ENCODE measurements at regions of chr12 and their contacts with region 1.

Region 1: GRCh38 chr12:53159195-53159839 is 21.2 kb upstream of the ZNF740 start:
- DNase-seq: peak; percentile 96
- ATAC-seq: peak; percentile 99
- H3K4me3 Mint-ChIP-seq: peak overlapping the region; percentile 27
- H3K27ac Mint-ChIP-seq: peak overlapping the region; percentile 81
- H3K4me1 Mint-ChIP-seq: peaks cover 11% of the 10 kb centered on the region
- H3K27me3 Mint-ChIP-seq: no peaks in the 10 kb centered on the region

Region 2: GRCh38 chr12:53131844-53132243 is 27.5 kb before region 1 on chr12:
- CTCF ChIA-PET with region 1: interaction called, 10 read pairs
- POLR2A ChIA-PET with region 1: no interaction called
- intact Hi-C with region 1: no loop called
- DNase-seq: no peak
- ATAC-seq: no peak
- H3K4me3 Mint-ChIP-seq: no peak overlapping the region
- H3K27ac Mint-ChIP-seq: no peak overlapping the region
- H3K4me1 Mint-ChIP-seq: peaks cover 4% of the 10 kb centered on the region
- H3K27me3 Mint-ChIP-seq: peaks cover 8% of the 10 kb centered on the region

Region 3: DNA sequence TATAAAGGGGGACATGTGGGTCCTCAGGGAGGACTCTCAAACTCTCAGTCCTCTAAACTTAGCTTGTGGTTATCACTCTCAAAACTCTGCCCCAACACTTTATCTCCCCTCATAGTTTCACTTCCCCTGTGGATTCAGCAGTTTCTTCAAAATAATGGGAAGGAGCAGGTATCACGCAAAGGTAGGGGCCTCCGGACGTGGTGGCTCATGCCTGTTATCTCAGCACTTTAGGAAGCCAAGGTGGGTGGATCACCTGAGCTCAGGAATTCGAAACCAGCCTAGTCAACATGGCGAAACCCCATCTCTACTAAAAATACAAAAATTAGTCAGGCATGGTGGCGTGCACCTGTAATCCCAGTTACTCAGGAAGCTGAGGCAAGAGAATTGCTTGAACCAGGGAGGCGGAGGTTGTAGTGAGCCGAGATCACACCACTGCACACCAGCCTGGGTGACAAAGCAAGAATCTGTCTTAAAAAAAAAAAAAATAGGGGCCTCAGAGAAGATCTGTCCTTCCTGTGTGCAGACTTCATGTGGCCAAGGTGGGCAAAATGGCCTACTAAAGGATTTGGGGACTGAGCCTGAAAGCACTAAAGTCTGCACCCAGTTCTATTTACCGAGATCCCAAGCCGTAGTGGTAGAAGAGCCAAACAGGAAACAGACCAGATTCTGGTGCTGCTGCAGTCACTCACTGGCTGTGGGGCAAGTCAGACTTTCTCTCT is 41.3 kb after region 1 on chr12:
- CTCF ChIA-PET with region 1: interaction called, 54 read pairs
- POLR2A ChIA-PET with region 1: interaction called, 3 read pairs
- intact Hi-C with region 1: loop called in 1 of 2 experiments (anchors 1 kb)
- DNase-seq: peak; percentile 68
- ATAC-seq: peak; percentile 52
- H3K4me3 Mint-ChIP-seq: peak overlapping the region; percentile 44
- H3K27ac Mint-ChIP-seq: peak overlapping the region; percentile 90
- H3K4me1 Mint-ChIP-seq: peaks cover 74% of the 10 kb centered on the region
- H3K27me3 Mint-ChIP-seq: no peaks in the 10 kb centered on the region

Region 4: DNA sequence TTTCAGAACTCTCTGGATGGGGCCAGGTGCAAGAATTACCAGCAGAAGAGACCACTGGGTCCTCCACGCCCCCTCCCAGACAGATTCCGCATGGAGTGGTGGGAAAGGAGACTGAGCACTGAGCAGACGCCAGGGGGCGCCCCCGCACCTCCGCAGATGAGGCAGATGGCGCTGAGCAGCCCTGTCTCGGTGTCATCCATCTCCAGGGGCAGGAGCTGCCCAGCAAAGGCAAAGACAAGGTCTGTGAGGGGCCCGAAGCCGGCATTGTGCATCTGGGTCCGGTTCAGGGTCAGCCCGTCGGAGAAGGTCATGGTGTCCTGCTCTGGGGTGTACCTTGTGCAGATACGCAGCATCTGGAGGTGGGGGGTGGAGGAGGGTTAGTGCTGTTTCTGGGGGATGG is 54.0 kb after region 1 on chr12:
- CTCF ChIA-PET with region 1: interaction called, 22 read pairs
- POLR2A ChIA-PET with region 1: no interaction called
- intact Hi-C with region 1: no loop called
- DNase-seq: peak; percentile 92
- ATAC-seq: peak; percentile 70
- H3K4me3 Mint-ChIP-seq: no peak overlapping the region
- H3K27ac Mint-ChIP-seq: no peak overlapping the region
- H3K4me1 Mint-ChIP-seq: peaks cover 62% of the 10 kb centered on the region
- H3K27me3 Mint-ChIP-seq: no peaks in the 10 kb centered on the region

Region 5: DNA sequence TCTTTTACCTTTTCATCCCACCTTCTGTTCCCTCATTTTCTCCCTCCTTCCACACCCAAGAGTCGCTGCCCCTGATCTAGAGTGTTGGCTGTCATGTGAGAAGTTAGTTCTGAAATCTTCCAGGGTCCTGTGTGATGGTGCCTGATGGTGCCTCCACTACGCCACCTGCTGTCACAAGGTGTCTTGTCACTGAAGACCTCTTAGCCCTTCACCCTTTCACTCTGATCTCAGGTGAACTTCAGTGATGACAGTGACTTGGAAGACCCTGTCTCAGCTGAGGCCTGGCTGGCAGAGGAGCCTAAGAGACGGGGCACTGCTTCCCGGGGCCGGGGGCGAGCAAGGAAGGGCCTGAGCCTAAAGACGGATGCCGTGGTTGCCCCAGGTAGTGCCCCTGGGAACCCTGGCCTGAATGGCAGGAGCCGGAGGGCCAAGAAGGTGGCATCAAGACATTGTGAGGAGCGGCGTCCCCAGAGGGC is 128.5 kb after region 1 on chr12:
- CTCF ChIA-PET with region 1: interaction called, 13 read pairs
- POLR2A ChIA-PET with region 1: no interaction called
- intact Hi-C with region 1: loop called in 1 of 2 experiments (anchors 1 kb)
- DNase-seq: peak; percentile 79
- ATAC-seq: peak; percentile 78
- H3K4me3 Mint-ChIP-seq: no peak overlapping the region
- H3K27ac Mint-ChIP-seq: no peak overlapping the region
- H3K4me1 Mint-ChIP-seq: peaks cover 15% of the 10 kb centered on the region
- H3K27me3 Mint-ChIP-seq: no peaks in the 10 kb centered on the region

Region 6: DNA sequence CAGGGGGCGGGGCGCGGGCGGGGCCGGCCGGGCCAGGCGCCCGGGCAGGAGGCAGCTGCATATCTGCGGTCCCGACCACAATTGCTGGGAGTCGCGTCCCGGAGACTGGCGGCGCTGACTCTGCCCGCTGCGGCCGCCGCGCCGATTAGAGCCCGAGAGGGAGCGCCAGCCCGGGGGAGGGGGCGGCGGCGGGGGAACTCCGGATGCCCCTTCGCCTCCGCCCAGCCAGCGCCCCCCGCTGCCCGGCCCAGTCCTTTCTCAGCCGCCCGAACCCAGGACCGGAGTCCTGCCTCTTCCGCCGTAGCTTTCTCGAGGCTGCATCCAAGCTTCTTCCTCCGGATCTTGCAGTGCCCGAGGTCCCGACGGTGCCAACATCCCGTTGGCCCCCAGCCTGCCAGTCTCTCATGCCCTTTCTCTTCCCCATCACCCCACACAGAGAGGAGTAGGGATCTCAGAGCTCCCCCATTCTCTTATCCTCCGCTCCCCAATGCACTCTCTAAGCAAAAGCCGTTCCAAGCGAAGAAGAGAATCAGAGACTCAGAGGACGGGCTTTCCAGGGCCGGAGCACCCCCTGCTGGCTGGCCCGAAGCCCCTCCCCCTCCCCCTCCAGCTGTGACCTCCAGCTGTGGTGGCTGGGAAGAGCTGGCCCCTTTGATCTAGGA is 185.6 kb after region 1 on chr12:
- CTCF ChIA-PET with region 1: interaction called, 9 read pairs
- POLR2A ChIA-PET with region 1: no interaction called
- intact Hi-C with region 1: loop called (anchors 1 to 2 kb)
- DNase-seq: peak; percentile 88
- ATAC-seq: peak; percentile 85
- H3K4me3 Mint-ChIP-seq: peak overlapping the region; percentile 83
- H3K27ac Mint-ChIP-seq: peak overlapping the region; percentile 90
- H3K4me1 Mint-ChIP-seq: peaks cover 24% of the 10 kb centered on the region
- H3K27me3 Mint-ChIP-seq: peaks cover 2% of the 10 kb centered on the region

Measured in activated CD4-positive, alpha-beta T cell treated with anti-CD3 and anti-CD28 coated beads for 36 hours (primary cell).